ENCODE measurements at regions of chr6 and their contacts with region 1.

Region 1: GRCh38 chr6:160137989-160138835 is 16.6 kb downstream of the SLC22A1 start:
- DNase-seq: no peak
- ATAC-seq: peak; percentile 43 to 65
- H3K4me3 ChIP-seq: no peak overlapping the region
- H3K27ac ChIP-seq: peak overlapping the region in 1 of 4 donors; percentile 21
- H3K4me1 ChIP-seq: peaks cover 0 to 19% of the 10 kb centered on the region in 2 donors
- H3K27me3 ChIP-seq: no peaks in the 10 kb centered on the region
- CTCF ChIP-seq: peak; percentile 60 to 74 (median 71)
- POLR2A ChIP-seq: no peak

Region 2: DNA sequence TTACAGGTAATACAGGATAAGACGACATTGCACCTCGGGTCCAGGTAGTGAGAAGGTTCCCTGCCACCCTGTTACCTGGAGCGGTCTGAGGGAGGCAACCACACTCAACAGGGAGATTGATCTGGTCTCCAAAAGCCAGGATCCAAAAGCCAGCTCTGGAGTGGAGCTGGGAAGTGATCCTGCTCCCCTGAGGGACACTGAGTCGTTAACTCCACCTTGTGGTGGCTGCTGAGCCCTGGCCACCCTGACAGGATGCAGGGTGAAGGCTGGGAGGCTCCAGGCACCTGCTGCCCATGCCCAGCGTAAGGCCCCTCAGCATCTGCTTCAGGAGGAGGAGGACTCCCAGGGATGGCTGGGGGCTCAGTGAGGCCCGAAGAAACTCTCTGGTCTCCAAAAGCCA is 159.1 kb after region 1 on chr6:
- in situ Hi-C with region 1: no loop called
- intact Hi-C with region 1: loop called (anchors 1 kb)
- DNase-seq: no peak
- ATAC-seq: peak in 1 of 2 donors; percentile 38
- H3K4me3 ChIP-seq: no peak overlapping the region
- H3K27ac ChIP-seq: no peak overlapping the region
- H3K4me1 ChIP-seq: peaks cover 8 to 16% of the 10 kb centered on the region in 2 donors
- H3K27me3 ChIP-seq: no peaks in the 10 kb centered on the region
- CTCF ChIP-seq: peak in 1 of 5 experiments; percentile 42
- POLR2A ChIP-seq: no peak

Region 3: DNA sequence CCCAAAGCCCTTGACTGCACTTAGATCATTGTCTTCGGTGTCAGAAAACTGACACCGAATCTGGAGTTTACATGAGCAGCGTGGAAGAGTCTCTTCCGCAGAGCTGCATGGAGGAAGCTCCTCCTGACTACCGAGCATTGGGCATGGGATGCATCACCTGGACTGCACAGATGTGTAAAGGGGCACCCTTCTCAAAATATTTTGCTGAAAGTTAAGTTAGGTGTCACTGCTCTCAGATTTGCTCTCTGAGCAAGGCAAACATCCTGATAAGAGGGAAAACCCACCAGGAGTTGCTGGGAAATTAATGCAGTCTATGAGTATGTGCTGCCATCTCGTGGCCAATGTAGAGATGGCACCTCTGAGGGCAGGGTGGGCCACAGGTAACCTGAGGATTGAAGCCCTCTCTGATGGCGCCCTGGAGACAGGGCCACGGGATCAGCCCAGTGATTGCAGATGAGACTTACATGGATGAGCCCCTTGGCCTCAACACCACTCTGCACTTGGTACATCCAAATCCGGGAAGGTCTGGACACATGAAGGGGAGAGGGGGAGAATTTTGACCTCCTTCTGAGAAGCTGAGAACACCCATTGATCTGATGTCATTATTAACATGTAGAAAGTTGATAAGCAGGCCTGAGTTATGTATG is 396.0 kb after region 1 on chr6:
- in situ Hi-C with region 1: no loop called
- intact Hi-C with region 1: loop called (anchors 10 kb)
- DNase-seq: peak in 1 of 2 donors; percentile 25
- ATAC-seq: peak in 1 of 2 donors; percentile 66
- H3K4me3 ChIP-seq: no peak overlapping the region
- H3K27ac ChIP-seq: no peak overlapping the region
- H3K4me1 ChIP-seq: peaks cover 0 to 3% of the 10 kb centered on the region in 2 donors
- H3K27me3 ChIP-seq: peaks cover 0 to 3% (median 0%) of the 10 kb centered on the region in 3 donors
- CTCF ChIP-seq: peak; percentile 82 to 92 (median 85)
- POLR2A ChIP-seq: no peak